ENCODE measurements at regions of chr2 and their contacts with region 1.

Region 1: DNA sequence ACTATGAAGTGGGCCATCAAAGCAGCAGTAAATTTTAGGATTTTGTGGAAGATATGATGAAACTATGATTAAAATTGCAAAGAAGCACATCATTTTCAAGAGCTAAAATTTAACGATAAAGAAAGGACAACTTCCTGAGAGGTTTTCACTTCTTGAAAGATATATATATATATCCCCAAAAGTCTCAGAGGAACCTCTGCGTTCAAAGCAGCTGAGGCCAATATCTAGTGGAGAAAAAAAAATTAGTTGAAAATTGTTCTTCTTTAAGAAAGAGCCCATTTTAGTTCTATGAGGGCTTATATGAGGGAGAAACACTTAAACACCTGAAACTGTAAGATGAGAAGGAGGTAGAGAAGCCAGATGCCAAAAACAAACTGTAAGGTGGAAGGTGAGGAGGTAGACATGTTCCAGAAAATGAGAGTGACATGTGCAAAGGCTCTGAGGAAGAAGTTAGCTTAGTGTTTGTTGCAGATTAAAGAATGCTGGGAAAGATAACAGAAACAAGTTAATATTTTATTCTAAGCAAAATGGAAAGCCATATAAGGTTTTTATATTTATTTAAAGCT is 72.9 kb upstream of the VRK2 start:
- DNase-seq: no peak
- H3K4me3 ChIP-seq: no peak overlapping the region
- H3K27ac ChIP-seq: no peak overlapping the region
- H3K4me1 ChIP-seq: no peaks in the 10 kb centered on the region
- H3K27me3 ChIP-seq: no peaks in the 10 kb centered on the region
- CTCF ChIP-seq: no peak

Region 2: DNA sequence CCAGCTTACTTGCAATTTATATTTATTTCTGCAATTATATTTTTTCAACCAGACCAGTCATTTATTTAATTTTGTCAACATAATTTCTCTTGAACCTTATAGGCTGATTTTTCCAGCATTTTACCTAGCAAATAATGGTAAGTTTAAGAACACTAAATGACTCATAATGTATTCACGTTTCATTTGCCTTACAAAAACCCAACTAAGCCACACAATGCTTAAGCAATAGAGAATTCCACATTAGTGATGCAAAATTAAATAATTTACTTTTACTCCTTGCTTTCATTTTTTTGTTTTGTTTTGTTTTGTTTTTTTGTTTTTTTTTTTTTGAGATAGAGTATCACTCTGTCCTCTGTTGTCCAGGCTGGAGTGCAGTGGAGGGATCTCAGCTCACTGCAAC is 37.5 kb before region 1 on chr2:
- CTCF ChIA-PET with region 1: no interaction called
- POLR2A ChIA-PET with region 1: no interaction called
- intact Hi-C with region 1: loop called (anchors 5 kb)
- DNase-seq: no peak
- H3K4me3 ChIP-seq: no peak overlapping the region
- H3K27ac ChIP-seq: no peak overlapping the region
- H3K4me1 ChIP-seq: no peaks in the 10 kb centered on the region
- H3K27me3 ChIP-seq: no peaks in the 10 kb centered on the region
- CTCF ChIP-seq: no peak

Region 3: DNA sequence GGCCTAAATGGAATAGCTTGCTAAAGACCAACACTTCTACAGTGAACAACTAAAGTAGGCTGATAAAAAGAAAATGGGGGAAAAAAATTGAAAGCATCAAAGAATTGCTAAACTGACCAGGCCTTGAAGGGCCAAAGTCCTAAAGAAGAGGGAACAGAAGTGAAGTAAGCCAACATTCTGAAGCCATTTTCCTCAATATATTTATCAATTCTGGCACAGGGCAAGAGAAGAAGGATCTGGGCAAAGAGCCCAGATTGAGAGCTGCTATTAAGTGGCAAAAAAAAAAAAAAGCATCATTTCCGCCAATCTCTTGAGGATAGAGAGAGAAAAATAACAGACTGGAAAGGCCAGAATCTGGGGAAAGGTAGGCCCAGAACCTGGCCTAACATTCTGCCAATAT is 241.7 kb after region 1 on chr2:
- CTCF ChIA-PET with region 1: no interaction called
- POLR2A ChIA-PET with region 1: no interaction called
- intact Hi-C with region 1: no loop called
- DNase-seq: no peak
- H3K4me3 ChIP-seq: no peak overlapping the region
- H3K27ac ChIP-seq: no peak overlapping the region
- H3K4me1 ChIP-seq: no peaks in the 10 kb centered on the region
- H3K27me3 ChIP-seq: no peaks in the 10 kb centered on the region
- CTCF ChIP-seq: no peak